ENCODE measurements at regions of chr4 and their contacts with region 1.

Region 1: DNA sequence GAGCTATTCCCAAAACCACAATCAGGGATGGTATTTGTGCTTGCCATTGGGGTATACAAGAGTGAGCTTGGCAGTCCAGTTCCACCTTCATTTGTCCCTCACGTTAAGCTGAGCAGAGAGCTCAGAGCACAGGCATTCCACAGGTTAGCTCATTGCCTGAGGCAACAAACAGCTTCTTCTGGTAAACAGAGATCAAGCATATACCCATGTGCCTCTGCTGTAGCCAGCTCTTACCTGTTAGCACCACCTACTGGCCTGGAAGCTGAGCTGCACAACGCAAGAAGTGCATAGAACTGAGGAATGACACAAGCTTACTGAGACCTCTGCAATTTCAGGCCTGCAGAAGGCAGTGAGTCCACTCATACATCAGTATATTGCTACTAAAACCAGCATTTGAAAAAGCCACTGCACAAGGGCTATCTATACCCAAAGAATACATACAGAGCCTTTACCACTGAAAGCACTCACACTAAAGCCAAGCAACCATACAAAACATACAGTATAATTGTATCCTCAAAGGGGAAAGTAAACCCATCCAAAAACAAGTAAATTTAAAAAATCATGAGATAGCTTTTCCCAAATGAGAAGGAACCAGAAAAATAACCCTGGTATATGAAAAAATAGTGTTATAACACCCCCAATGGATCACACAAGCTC is 258.3 kb upstream of the GABRA2 start:
- DNase-seq: peak; percentile 63
- ATAC-seq: peak; percentile 99
- H3K4me3 Mint-ChIP-seq: no peak overlapping the region
- H3K27ac Mint-ChIP-seq: no peak overlapping the region
- H3K4me1 Mint-ChIP-seq: 0 out of 2 replicates have a peak, but pooled peaks cover 5% of the 10 kb centered on the region
- H3K27me3 Mint-ChIP-seq: no peaks in the 10 kb centered on the region
- CTCF ChIP-seq: peak; percentile 63

Region 2: GRCh38 chr4:46389301-46389775 is 258.9 kb before region 1 on chr4:
- CTCF ChIA-PET with region 1: interaction called, 42 read pairs
- POLR2A ChIA-PET with region 1: no interaction called
- DNase-seq: peak; percentile 24
- ATAC-seq: peak; percentile 51
- H3K4me3 Mint-ChIP-seq: peak overlapping the region; percentile 90
- H3K27ac Mint-ChIP-seq: no peak overlapping the region
- H3K4me1 Mint-ChIP-seq: peaks cover 19% of the 10 kb centered on the region
- H3K27me3 Mint-ChIP-seq: peaks cover 58% of the 10 kb centered on the region
- CTCF ChIP-seq: no peak

Region 3: DNA sequence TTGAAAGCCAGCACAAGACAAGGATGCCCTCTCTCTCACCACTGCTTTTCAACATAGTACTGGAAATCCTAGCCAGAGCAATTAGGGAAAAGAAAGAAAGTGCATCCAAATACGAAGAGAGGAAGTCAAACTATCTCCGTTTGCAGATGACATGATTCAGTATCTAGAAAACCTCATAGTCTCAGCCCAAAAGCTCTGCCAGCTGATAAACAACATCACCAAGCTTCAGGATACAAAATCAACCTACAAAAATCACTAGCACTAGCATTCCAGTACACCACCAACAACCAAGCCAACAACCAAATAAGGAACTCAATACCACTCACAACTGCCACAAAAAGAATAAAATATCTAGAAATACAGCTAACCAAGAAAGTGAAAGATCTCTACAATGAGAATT is 222.2 kb after region 1 on chr4:
- CTCF ChIA-PET with region 1: no interaction called
- POLR2A ChIA-PET with region 1: no interaction called
- DNase-seq: no peak
- ATAC-seq: no peak
- H3K4me3 Mint-ChIP-seq: no peak overlapping the region
- H3K27ac Mint-ChIP-seq: no peak overlapping the region
- H3K4me1 Mint-ChIP-seq: peaks cover 12% of the 10 kb centered on the region
- H3K27me3 Mint-ChIP-seq: no peaks in the 10 kb centered on the region; the same call in 1 of the 2 replicates
- CTCF ChIP-seq: no peak

Measured in WTC11 (cell line).